ENCODE measurements at regions of chr14 and their contacts with region 1.

Region 1: GRCh38 chr14:99884834-99885648 is 91.8 kb downstream of the EML1 start:
- DNase-seq: no peak
- ATAC-seq: peak; percentile 77

Region 2: DNA sequence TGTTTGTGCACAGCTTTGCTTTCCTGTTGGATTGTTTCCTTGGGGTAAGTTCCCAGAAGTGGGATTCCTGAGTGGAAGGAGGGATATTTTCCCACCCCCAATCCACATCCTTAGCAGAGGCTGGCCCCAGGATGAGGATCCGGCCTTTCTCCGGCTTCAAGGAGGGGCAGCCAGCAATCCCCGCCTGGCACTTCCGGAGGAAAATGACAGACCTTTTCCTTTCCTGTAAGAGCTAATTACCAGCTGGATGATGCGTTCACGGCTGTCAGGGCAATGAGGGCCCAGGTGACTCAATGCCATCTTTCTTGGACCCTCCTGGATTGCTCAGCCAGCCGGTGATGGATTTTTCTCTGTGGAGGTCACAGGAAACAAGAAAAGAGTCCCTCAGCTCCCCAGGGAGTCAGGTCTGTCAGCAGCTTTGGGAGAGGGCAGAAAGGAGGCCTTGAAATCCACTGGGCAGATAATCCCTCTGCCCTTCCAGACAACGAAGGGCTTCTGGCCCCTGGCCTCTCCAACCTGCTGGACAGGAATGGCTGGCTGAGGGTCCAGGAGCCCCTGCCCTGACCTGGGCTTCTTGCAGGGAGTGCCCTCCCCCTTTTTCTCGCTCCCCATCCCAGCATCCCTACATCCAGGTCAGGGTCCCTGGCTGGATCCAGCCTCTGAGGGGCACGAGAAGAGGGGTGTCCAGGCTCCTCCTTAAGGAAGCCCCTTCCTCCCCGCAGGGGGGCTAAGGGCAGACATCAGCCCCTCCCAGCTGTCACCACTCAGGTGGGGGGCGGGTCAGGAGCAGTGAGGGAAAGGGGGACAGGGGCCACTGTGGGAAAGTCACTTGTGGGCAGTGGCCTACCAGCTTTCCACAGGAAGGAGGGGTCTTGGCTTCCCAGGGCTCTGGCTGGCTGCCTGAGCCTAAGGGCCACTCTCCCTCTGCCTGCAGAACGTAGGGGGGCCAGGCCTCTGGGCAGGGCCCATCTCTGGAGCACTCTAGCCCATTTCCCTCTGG is 264.9 kb before region 1 on chr14:
- intact Hi-C with region 1: no loop called
- DNase-seq: no peak
- ATAC-seq: peak; percentile 29

Region 3: DNA sequence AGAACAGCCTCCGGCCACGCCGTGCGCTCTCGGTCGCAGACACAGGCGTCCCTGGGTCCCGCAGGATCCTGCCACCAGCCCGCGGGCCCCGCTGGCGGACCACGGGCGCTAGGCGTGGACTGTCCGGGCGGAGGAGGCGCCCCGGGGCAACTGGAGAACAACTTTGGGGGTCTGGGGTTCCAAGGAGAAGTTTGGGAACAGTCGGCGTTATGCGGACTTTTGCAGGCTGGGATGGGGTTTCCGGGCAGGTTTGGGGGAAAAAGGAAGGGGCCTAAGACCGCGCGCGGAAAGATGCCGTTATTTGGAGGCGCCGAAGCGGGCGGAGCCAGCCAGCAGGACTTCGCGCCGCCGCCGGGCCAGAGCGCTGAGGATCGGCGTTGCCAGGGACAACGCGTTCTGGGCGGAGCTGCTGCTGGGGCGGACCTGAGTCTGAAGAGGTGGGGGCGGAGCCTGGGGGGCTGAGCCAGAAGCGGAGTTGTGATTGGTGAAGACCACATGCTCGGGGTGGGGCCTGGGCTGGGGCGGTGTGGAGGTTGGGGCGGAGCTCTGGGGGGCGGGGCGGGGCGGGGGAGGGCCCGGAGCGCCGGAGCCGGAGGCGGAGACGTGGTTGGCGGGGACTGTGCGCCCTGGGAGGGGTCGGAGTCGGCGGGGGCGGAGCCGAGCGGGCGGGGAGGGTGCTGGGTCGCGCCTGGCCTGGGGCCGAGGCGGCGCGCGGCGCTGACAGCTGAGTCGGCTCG is 201.3 kb before region 1 on chr14 and contains the start of gene CYP46A1:
- intact Hi-C with region 1: loop called (anchors 5 kb)
- DNase-seq: peak; percentile 100
- ATAC-seq: peak; percentile 95
- total RNA-seq, gene CYP46A1: 3.0 TPM

Region 4: DNA sequence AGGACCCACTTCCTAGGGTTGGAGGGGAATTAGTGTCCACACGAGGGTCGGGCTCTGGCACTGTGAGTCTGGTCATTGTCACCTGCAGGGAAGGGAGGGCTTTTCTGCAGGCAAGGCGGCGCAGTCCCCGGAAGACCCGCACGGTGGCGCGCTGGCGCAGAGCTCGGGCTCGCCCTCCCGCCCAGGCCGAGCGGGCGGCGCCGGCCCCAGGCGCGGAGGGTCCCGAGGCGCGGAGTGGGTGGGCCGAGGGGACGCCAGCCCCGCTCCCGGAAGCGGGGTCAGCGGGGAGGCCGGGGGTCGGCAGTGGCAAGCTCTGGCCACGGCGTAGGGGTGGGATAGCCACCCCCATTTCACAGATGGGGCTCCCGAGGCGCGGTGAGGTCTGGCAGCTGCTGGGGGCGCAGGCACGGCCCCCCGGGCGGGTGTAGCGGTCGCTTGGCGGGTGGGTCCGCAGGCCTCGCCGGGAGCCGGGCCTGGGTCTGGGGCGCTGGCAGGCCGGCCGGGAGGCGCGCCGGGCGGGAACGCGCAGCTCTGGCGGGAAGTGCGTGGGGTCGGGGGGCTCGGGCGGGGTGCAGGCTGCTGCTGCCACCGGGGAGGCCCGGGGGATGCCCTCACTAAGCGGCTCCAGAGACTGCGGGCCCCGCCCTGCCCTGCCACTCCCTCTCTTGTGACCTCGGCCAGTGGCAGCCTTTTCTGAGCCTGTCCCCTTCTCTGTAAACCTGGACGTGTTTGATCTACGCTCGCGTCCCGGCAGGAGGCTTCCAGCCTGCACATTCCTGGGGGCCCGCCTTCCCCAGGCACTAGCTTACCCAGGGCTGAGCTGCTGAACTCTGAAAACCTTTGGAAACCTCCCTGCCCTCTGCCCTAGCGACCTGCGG is 154.8 kb before region 1 on chr14:
- intact Hi-C with region 1: loop called (anchors 5 kb)
- DNase-seq: peak; percentile 86
- ATAC-seq: peak; percentile 74

Measured in left ventricle myocardium superior (tissue), 1 donor.